ENCODE measurements at regions of chr10 and their contacts with region 1.

Region 1: GRCh38 chr10:128211953-128212727 is 85.9 kb upstream of the MKI67 start:
- DNase-seq: peak; percentile 66 to 91 (median 80)
- ATAC-seq: peak; percentile 87
- H3K4me3 ChIP-seq: peak overlapping the region; percentile 44
- H3K4me3 Mint-ChIP-seq: peak overlapping the region; percentile 75 to 91 (median 86)
- H3K27ac ChIP-seq: no peak overlapping the region
- H3K27ac Mint-ChIP-seq: peak overlapping the region; percentile 83 to 94 (median 88)
- H3K4me1 ChIP-seq: peaks cover 4 to 8% of the 10 kb centered on the region in 2 donors
- H3K4me1 Mint-ChIP-seq: peaks cover 10 to 25% (median 17%) of the 10 kb centered on the region in 7 donors
- H3K27me3 ChIP-seq: no peaks in the 10 kb centered on the region
- H3K27me3 Mint-ChIP-seq: peaks cover 0 to 21% (median 0%) of the 10 kb centered on the region in 5 donors

Region 2: GRCh38 chr10:128064108-128064969 is 147.8 kb before region 1 on chr10:
- CTCF ChIA-PET with region 1: interaction called, 3 read pairs
- POLR2A ChIA-PET with region 1: no interaction called
- intact Hi-C with region 1: loop called in 1 of 2 experiments (anchors 5 kb)
- DNase-seq: peak in 8 of 9 donors; percentile 52 to 77 (median 67)
- ATAC-seq: peak; percentile 71
- H3K4me3 ChIP-seq: peak overlapping the region; percentile 52
- H3K4me3 Mint-ChIP-seq: peak overlapping the region; percentile 75 to 96 (median 86)
- H3K27ac ChIP-seq: peak overlapping the region; percentile 61
- H3K27ac Mint-ChIP-seq: peak overlapping the region; percentile 72 to 93 (median 87)
- H3K4me1 ChIP-seq: peaks cover 42 to 53% of the 10 kb centered on the region in 2 donors
- H3K4me1 Mint-ChIP-seq: peaks cover 50 to 87% (median 76%) of the 10 kb centered on the region in 7 donors
- H3K27me3 ChIP-seq: no peaks in the 10 kb centered on the region
- H3K27me3 Mint-ChIP-seq: no peaks in the 10 kb centered on the region

Region 3: DNA sequence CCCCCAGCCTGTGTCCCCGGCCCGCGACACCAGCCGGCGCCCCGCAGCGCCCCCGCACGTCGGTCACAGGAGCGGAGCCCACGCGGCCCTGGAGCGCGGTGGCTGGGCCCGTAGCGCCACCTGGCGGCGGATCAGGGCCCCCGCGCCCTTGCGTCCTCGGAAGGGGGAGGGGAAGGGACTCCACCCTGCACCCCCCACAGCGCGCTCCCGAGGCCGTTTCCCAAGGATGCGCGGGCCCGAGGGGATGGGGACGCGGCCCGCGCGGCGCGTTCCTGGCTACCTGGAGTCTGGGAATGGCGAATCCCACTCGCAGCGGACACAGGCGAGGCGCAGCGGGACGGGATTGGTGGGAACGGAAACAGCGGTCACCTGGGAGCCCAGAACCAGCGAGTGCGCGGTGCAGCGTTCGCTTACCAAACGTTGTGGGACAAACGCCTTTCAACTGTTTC is 62.1 kb before region 1 on chr10:
- CTCF ChIA-PET with region 1: interaction called, 3 read pairs
- POLR2A ChIA-PET with region 1: no interaction called
- intact Hi-C with region 1: loop called (anchors 1 kb)
- DNase-seq: peak; percentile 71 to 89 (median 83)
- ATAC-seq: peak; percentile 99
- H3K4me3 ChIP-seq: peak overlapping the region; percentile 79
- H3K4me3 Mint-ChIP-seq: peak overlapping the region; percentile 32 to 77 (median 60)
- H3K27ac ChIP-seq: no peak overlapping the region
- H3K27ac Mint-ChIP-seq: peak overlapping the region in 1 of 9 donors; percentile 14
- H3K4me1 ChIP-seq: no peaks in the 10 kb centered on the region
- H3K4me1 Mint-ChIP-seq: peaks cover 0 to 16% (median 3%) of the 10 kb centered on the region in 7 donors
- H3K27me3 ChIP-seq: no peaks in the 10 kb centered on the region
- H3K27me3 Mint-ChIP-seq: peaks cover 0 to 26% (median 0%) of the 10 kb centered on the region in 5 donors

Region 4: DNA sequence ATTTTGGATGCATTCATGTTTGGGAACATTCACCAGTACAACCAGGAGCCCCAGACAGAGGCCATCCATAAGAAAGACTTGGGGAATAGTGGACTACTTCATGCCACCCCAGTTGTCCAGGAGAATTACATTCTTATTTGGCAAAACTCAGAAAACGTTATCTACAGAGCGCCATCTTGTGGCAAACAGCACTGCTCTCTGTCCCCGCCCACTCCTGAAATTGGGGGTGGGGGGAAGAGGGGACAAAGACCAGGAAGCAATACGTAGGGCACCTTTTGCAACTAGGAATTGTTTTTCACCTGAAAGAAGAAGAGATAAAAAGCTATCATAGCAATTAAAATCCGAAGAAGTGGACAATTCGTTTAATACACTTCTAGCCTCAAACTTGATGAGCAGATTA is 1120.3 kb after region 1 on chr10:
- CTCF ChIA-PET with region 1: no interaction called
- POLR2A ChIA-PET with region 1: no interaction called
- intact Hi-C with region 1: loop called in 1 of 2 experiments (anchors 2 kb)
- DNase-seq: peak in 4 of 9 donors; percentile 8 to 29 (median 19)
- ATAC-seq: no peak
- H3K4me3 ChIP-seq: no peak overlapping the region
- H3K4me3 Mint-ChIP-seq: peak overlapping the region in 2 of 10 donors; percentile 37 to 44
- H3K27ac ChIP-seq: no peak overlapping the region
- H3K27ac Mint-ChIP-seq: peak overlapping the region in 1 of 9 donors; percentile 0
- H3K4me1 ChIP-seq: no peaks in the 10 kb centered on the region
- H3K4me1 Mint-ChIP-seq: peaks cover 0 to 9% (median 4%) of the 10 kb centered on the region in 7 donors
- H3K27me3 ChIP-seq: no peaks in the 10 kb centered on the region
- H3K27me3 Mint-ChIP-seq: peaks cover 8 to 31% (median 12%) of the 10 kb centered on the region in 5 donors

Region 5: DNA sequence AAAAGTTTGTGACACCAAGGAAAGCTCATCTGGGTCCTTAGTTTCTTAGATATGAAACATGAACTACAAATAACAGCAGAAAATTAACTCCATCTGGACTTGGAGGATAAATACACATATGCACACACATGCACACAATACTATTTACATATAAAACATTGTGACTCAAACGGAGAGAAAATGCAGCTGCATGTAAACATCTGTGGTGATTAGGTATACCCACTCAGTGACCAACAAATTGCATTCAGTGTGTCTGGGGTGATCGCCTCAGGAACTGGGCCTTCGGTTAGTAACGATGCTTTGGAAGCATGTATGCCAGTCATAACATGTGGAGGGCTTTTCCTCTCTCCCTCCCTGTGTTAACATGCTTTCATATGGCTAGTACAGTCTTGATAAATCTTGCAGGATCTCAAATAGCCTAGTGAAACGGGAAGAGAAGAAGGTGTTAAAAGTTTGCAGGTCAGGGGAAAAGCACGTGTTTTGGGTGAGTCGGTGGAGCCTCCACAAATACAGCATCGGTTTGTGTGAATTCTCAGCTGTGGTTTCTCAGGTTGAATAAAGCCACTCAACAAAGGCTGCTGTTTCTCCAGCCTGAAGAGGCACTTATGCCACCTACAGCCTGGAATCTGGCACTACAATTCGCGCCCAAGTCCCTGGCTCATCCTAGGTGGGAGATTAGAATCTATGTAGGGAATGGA is 1915.4 kb after region 1 on chr10:
- CTCF ChIA-PET with region 1: interaction called, 3 read pairs
- POLR2A ChIA-PET with region 1: no interaction called
- intact Hi-C with region 1: loop called in 1 of 2 experiments (anchors 2 kb)
- DNase-seq: peak in 8 of 9 donors; percentile 24 to 60 (median 46)
- ATAC-seq: peak; percentile 92
- H3K4me3 ChIP-seq: no peak overlapping the region
- H3K4me3 Mint-ChIP-seq: peak overlapping the region in 2 of 10 donors; percentile 19 to 22
- H3K27ac ChIP-seq: no peak overlapping the region
- H3K27ac Mint-ChIP-seq: no peak overlapping the region
- H3K4me1 ChIP-seq: no peaks in the 10 kb centered on the region
- H3K4me1 Mint-ChIP-seq: peaks cover 0 to 10% (median 7%) of the 10 kb centered on the region in 7 donors
- H3K27me3 ChIP-seq: no peaks in the 10 kb centered on the region
- H3K27me3 Mint-ChIP-seq: peaks cover 9 to 53% (median 17%) of the 10 kb centered on the region in 5 donors